ENCODE measurements at regions of chr14 and their contacts with region 1.

Region 1: GRCh38 chr14:89252887-89253547 is 164.0 kb downstream of the FOXN3 start:
- DNase-seq: no peak
- ATAC-seq: no peak
- H3K4me3 Mint-ChIP-seq: no peak overlapping the region
- H3K27ac Mint-ChIP-seq: no peak overlapping the region
- H3K4me1 Mint-ChIP-seq: peaks cover 28% of the 10 kb centered on the region
- H3K27me3 Mint-ChIP-seq: no peaks in the 10 kb centered on the region
- CTCF ChIP-seq: no peak

Region 2: DNA sequence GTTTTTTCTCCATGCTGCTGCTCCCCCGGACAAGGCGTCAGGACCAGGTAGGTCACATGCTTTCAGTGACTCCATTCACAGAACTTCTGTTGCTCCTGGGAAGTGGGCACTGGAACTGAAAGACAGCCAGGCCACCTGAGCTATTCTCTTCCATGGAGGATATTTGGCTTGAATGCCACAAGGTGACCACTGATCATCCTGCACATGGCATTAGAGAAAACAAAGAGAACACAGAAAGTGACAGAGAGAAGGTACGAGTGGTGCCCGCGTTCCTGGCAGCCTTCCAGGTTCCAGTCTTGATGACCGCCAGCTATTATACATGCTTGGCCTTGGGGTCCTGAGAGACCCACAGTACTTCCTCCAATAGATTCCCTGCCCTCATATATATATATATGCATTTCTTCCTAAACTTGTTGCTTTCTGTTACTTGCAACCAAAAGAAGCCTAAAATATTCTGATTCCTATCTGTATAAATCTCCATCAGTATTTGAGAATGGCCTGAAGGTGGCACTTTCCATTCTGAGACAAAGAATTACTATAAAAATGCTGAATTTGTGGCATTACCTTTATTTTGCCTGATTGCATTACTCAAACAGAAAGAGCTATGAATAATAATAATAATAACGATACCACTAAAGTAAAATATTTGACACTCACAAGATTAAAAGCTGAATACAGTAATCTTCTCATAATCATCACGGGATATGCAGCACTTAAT is 10.9 kb before region 1 on chr14:
- CTCF ChIA-PET with region 1: interaction called, 10 read pairs
- POLR2A ChIA-PET with region 1: no interaction called
- intact Hi-C with region 1: no loop called
- DNase-seq: no peak
- ATAC-seq: no peak
- H3K4me3 Mint-ChIP-seq: peak overlapping the region; percentile 4
- H3K27ac Mint-ChIP-seq: peak overlapping the region; percentile 3
- H3K4me1 Mint-ChIP-seq: peaks cover 56% of the 10 kb centered on the region
- H3K27me3 Mint-ChIP-seq: no peaks in the 10 kb centered on the region
- CTCF ChIP-seq: no peak

Measured in activated B cell treated with CpG ODN at 0.5 μM for 24 hours (primary cell).